ENCODE measurements at regions of chr14 and their contacts with region 1.

Region 1: GRCh38 chr14:61315313-61315712 is 6.1 kb upstream of the PRKCH start:
- DNase-seq: no peak

Region 2: DNA sequence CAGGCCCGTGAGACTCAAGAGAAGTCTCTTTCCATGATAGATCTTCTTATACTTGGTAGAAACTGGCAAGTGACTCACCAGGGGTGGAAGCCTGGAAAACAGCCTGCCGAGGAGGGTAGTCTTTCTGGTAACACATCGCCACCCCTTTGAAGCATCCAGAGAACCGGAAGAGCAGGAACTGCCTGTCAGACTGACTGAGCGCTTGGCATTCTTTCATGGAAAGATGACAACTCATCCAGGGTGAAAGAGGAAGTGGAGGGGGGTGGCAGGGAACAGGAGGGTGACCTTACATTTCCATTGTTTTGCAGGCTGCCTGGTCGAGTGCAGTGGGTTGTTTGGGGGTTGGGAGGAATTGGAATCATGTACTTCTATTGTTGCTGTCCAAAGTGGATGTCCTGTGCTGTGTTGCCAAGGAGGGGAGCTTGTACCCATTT is 40.6 kb after region 1 on chr14:
- intact Hi-C with region 1: no loop called
- DNase-seq: no peak

Region 3: DNA sequence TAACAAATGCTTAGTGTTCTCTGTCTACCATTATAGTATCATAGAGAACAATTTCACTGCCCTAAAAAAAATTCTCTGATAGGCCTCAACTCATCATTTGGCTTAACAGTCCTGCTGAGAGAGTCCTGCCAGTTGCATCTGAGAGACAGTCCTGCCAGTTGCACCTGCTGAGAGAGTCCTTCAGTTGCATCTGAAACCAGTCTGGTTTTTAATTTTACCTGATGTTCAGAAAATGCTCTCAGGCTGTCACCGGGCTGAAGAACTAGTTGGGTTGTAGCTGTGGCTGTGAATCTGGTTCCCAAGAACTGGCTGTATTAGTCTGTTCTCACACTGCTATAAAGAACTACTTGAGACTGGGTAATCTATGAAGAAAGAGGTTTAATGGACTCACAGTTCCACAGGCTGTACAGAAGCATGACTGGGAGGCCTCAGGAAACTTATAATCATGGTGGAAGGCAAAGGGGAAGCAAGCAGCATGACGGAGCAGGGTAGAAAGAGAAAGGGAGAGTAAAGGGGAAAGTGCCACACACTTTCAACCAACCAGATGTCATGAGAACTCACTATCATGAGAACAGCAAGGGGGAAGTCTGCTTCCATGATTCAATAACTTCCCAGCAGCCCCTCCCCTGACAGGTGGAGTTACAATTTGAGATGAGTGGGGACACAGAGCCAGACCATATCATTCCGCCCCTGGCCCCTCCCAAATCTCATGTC is 57.7 kb after region 1 on chr14:
- intact Hi-C with region 1: no loop called
- DNase-seq: no peak

Region 4: GRCh38 chr14:61420326-61420725 is 105.0 kb after region 1 on chr14:
- intact Hi-C with region 1: loop called in 1 of 2 experiments (anchors 10 kb)
- DNase-seq: no peak

Measured in posterior vena cava (tissue), 2 donors.